Prostate gland (tissue), 2 donors: ENCODE measurements at regions of chr6 and their contacts with region 1.

Region 1: DNA sequence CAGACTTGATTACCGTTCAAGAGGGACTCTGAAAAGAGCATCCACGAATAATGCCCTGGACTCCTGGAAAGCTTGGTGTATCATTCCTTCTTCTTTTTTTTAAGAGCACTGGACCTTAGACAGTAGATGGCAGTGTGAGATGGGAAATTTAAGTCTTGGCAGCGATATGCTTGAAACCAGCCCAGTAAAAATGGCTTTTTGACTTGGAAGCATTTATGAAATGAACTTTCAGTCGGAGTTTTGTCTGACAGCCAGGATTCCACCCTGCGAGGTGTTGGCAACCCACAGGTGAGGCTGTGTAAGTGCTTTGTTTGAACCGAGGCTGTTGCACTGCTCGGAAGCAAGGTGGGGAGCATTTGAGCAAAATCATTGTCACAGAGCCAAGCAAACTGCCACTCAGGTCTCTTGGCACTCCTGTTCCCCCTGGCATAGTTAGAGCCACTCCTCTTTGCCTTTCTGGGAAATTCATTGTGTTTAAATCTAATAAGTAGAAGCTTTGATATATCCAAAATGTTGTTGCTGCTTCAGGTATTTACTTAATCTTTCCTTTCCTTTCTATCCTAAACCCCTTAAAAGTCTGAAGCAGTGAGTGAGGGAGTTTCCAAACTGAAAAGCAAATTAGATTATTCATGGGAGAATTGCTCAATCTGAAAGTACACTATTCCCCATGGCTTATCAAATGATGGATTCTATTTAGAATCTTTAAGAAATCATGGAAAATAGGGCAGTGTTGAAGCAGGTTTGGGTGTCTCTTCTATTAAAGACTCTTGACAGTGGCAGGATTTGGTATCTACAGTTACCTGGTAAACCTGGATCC is 272.8 kb upstream of the SLC35B3 start:
- DNase-seq: peak; percentile 81
- H3K4me3 ChIP-seq: peak overlapping the region in 1 of 2 donors; percentile 12
- H3K27ac ChIP-seq: no peak overlapping the region
- H3K4me1 ChIP-seq: no peaks in the 10 kb centered on the region
- H3K27me3 ChIP-seq: no peaks in the 10 kb centered on the region
- CTCF ChIP-seq: peak in 3 of 4 experiments; percentile 33 to 60 (median 54)
- POLR2A ChIP-seq: no peak

Region 2: GRCh38 chr6:8435160-8435852 is 272.9 kb before region 1 on chr6 and contains the start of gene SLC35B3:
- intact Hi-C with region 1: no loop called
- DNase-seq: peak; percentile 92
- H3K4me3 ChIP-seq: peak within 1 kb of the TSS; percentile 60 to 71
- H3K27ac ChIP-seq: peak within 1 kb of the TSS; percentile 81 to 86
- H3K4me1 ChIP-seq: no peaks in the 10 kb centered on the region
- H3K27me3 ChIP-seq: no peaks in the 10 kb centered on the region
- CTCF ChIP-seq: peak in 1 of 4 experiments; percentile 4
- POLR2A ChIP-seq: peak; percentile 92
- total RNA-seq, gene SLC35B3: 12.3 to 16.9 TPM

Region 3: DNA sequence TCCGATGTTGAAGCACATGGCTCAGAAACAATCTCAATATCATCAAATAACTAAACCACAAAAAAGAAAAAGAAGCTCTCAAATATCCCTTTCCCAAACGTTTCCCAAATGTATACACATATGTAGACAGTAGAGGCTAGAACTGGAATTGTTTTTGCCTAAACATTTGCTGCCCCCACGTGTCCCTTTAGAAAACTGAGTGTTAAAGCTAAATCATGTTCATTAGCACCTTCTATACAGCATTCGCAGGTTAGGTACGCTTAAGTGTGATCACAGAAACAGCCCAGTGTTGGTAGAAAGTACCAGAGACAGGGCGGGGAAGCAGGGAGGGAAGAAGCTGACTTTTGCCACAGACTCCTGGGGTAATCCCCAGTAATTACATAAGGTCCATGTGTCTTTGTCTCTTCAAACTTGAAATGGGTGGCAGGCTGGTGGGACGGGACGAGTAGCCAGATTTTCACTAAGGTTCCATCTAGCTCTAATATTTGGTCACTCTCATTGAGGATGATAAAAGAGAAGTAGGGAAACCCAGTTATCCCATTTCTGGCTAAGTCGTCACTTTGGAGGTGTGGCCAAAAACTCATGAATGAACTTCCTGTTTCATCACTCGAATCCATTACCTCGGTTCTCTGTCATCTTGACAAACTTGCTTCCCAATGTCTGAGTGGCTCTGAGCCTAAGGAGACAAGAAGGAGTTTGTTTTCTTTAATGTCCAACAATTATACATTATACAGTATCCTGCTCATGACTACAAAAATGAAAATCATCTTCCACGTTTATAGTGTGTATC is 1721.7 kb after region 1 on chr6:
- intact Hi-C with region 1: loop called (anchors 10 kb)
- DNase-seq: no peak
- H3K4me3 ChIP-seq: no peak overlapping the region
- H3K27ac ChIP-seq: no peak overlapping the region
- H3K4me1 ChIP-seq: no peaks in the 10 kb centered on the region
- H3K27me3 ChIP-seq: no peaks in the 10 kb centered on the region
- CTCF ChIP-seq: peak; percentile 13 to 78 (median 52)
- POLR2A ChIP-seq: no peak